Caco-2 (cell line): ENCODE measurements at regions of chr17 and their contacts with region 1.

Region 1: DNA sequence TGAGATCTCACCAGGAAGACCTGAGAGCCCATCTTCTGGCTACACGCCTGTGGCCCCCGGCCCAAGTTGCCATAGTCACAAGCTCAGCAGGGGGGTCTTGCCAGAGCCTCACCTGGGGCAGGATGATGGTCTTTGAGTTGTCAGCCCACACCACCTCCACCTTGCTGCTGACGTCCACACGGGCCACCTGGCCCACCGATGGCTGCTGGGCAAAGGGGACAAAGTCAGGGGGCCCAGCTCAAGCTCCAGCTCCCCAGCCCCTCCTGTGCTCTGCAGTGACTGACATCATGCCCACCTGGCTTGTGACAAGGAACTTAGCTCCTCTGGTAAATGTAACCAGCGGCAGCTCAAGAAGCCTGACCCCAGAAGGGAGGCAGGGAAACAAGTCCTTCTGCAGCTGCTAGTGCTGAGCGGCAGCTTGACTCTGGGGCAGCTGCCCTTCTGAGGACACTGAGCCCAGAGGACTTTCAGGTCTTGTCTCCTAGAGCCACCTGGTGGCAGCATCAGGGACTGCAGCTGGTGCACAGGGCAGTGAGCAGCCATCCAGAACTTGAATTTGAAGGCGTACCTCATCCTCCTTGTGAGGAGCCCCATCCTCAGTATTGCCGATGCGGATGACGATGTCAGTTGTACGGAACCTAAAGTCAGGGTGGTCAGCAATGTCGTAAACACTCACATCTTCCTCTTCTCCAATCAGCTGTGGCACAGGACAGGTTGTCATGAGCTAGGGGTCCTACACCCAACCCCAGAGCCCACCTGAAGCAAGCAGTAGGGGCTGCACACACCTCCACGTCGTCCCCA is 13.5 kb downstream of the SPHK1 start:
- DNase-seq: peak; percentile 88 to 91
- H3K4me3 ChIP-seq: no peak overlapping the region
- H3K4me3 Mint-ChIP-seq: no peak overlapping the region
- H3K27ac Mint-ChIP-seq: no peak overlapping the region
- H3K4me1 ChIP-seq: no peaks in the 10 kb centered on the region
- H3K4me1 Mint-ChIP-seq: no peaks in the 10 kb centered on the region
- H3K27me3 ChIP-seq: no peaks in the 10 kb centered on the region
- H3K27me3 Mint-ChIP-seq: no peaks in the 10 kb centered on the region
- CTCF ChIP-seq: peak; percentile 96 to 98

Region 2: GRCh38 chr17:76304226-76305134 is 93.4 kb before region 1 on chr17:
- CTCF ChIA-PET with region 1: interaction called, 21 read pairs
- POLR2A ChIA-PET with region 1: no interaction called
- intact Hi-C with region 1: loop called (anchors 1 kb)
- DNase-seq: no peak
- H3K4me3 ChIP-seq: no peak overlapping the region
- H3K4me3 Mint-ChIP-seq: no peak overlapping the region
- H3K27ac Mint-ChIP-seq: no peak overlapping the region
- H3K4me1 ChIP-seq: no peaks in the 10 kb centered on the region
- H3K4me1 Mint-ChIP-seq: peaks cover 6% of the 10 kb centered on the region
- H3K27me3 ChIP-seq: no peaks in the 10 kb centered on the region
- H3K27me3 Mint-ChIP-seq: no peaks in the 10 kb centered on the region
- CTCF ChIP-seq: no peak

Region 3: GRCh38 chr17:76337413-76337777 is 60.5 kb before region 1 on chr17:
- CTCF ChIA-PET with region 1: no interaction called
- POLR2A ChIA-PET with region 1: no interaction called
- intact Hi-C with region 1: no loop called
- DNase-seq: no peak
- H3K4me3 ChIP-seq: no peak overlapping the region
- H3K4me3 Mint-ChIP-seq: no peak overlapping the region
- H3K27ac Mint-ChIP-seq: no peak overlapping the region
- H3K4me1 ChIP-seq: no peaks in the 10 kb centered on the region
- H3K4me1 Mint-ChIP-seq: no peaks in the 10 kb centered on the region
- H3K27me3 ChIP-seq: no peaks in the 10 kb centered on the region
- H3K27me3 Mint-ChIP-seq: no peaks in the 10 kb centered on the region
- CTCF ChIP-seq: no peak

Region 4: GRCh38 chr17:76353599-76354316 is 44.1 kb before region 1 on chr17 and contains the start of gene PRPSAP1:
- CTCF ChIA-PET with region 1: interaction called, 12 read pairs
- POLR2A ChIA-PET with region 1: no interaction called
- intact Hi-C with region 1: no loop called
- DNase-seq: peak; percentile 89 to 91
- H3K4me3 ChIP-seq: peak within 1 kb of the TSS; percentile 83
- H3K4me3 Mint-ChIP-seq: peak within 1 kb of the TSS; percentile 94
- H3K27ac Mint-ChIP-seq: peak within 1 kb of the TSS; percentile 97
- H3K4me1 ChIP-seq: peaks cover 15% of the 10 kb centered on the region
- H3K4me1 Mint-ChIP-seq: peaks cover 10% of the 10 kb centered on the region
- H3K27me3 ChIP-seq: no peaks in the 10 kb centered on the region
- H3K27me3 Mint-ChIP-seq: no peaks in the 10 kb centered on the region
- CTCF ChIP-seq: peak; percentile 49 to 59
- total RNA-seq, gene PRPSAP1: 81.3 and 87.6 TPM in 2 replicates

Region 5: GRCh38 chr17:76365256-76365903 is 32.5 kb before region 1 on chr17:
- CTCF ChIA-PET with region 1: interaction called, 15 read pairs
- POLR2A ChIA-PET with region 1: no interaction called
- intact Hi-C with region 1: no loop called
- DNase-seq: no peak
- H3K4me3 ChIP-seq: no peak overlapping the region
- H3K4me3 Mint-ChIP-seq: no peak overlapping the region
- H3K27ac Mint-ChIP-seq: no peak overlapping the region
- H3K4me1 ChIP-seq: peaks cover 5% of the 10 kb centered on the region
- H3K4me1 Mint-ChIP-seq: peaks cover 5% of the 10 kb centered on the region
- H3K27me3 ChIP-seq: no peaks in the 10 kb centered on the region
- H3K27me3 Mint-ChIP-seq: no peaks in the 10 kb centered on the region
- CTCF ChIP-seq: peak in 1 of 2 experiments; percentile 26

Region 6: DNA sequence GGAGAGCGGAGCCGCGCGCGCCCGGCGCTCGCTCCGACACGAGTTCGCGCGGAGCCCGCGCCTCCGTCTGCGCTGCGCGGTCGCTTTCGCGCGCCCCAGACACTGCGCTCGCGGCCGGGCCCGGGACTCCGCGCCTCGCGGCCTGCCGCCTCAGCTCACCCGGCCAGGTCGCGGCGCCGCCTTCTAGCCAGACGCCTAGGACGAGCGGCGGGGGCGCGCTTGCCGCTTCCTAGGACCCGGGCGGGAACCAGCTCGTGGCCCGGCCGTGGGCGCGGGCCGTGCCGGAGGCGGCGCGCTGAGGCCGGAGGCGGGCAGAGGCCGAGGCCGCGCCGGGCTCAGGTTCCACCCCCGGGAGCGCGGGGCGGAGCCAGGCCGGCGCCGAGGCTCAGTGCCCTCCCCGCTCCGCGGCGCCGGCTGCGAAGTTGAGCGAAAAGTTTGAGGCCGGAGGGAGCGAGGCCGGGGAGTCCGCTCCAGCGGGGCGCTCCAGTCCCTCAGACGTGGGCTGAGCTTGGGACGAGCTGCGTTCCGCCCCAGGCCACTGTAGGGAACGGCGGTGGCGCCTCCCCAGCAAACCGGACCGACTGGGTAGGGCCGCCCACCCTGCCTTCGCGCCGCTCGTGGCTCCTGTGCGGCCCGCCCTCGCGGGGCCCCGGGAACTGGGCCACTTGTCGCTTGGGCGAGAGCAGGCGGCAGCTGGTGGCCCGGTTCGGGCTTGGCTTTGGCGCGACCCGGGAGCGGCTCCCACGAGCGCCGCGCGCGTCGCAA is 13.5 kb before region 1 on chr17 and contains the start of gene SPHK1:
- CTCF ChIA-PET with region 1: interaction called, 49 read pairs
- POLR2A ChIA-PET with region 1: interaction called, 3 read pairs
- intact Hi-C with region 1: no loop called
- DNase-seq: peak; percentile 69 to 83
- H3K4me3 ChIP-seq: peak within 1 kb of the TSS; percentile 76
- H3K4me3 Mint-ChIP-seq: peak within 1 kb of the TSS; percentile 91
- H3K27ac Mint-ChIP-seq: peak within 1 kb of the TSS; percentile 23
- H3K4me1 ChIP-seq: peaks cover 14% of the 10 kb centered on the region
- H3K4me1 Mint-ChIP-seq: no peaks in the 10 kb centered on the region
- H3K27me3 ChIP-seq: peaks cover 1% of the 10 kb centered on the region; the same call in 1 of the 2 replicates
- H3K27me3 Mint-ChIP-seq: no peaks in the 10 kb centered on the region
- CTCF ChIP-seq: no peak
- total RNA-seq, gene SPHK1: 6.7 and 7.7 TPM in 2 replicates